AG04450 (cell line): ENCODE measurements at regions of chr1 and their contacts with region 1.

Region 1: DNA sequence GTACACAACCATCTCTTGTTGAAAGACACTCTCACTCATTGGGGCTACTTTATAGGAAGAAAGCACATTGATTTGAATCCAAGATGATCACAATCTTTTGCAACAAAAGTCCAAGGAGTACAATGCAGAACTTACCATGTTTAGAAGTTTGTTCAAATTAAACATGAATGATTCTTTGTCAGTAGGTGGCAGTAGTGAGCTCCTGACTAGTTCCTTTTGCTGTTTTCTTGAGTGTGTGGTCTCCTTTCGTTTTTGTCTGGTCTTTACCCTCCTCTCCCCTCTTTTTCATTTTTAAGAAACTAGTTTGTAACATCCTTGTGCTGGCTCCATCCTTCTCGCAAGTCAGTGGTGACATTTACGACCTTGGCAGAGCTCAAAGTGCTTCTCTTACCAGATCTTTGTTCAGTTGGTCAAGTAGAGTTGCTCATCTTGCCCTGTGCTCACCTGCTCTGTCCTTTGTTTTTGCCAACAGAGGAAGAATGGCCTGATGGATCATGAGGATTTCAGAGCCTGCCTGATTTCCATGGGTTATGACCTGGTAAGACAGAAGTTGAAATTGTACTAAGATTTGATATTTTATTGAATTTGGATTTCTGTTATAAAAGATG is 35.7 kb upstream of the MTR start:
- DNase-seq: peak; percentile 8
- H3K4me3 ChIP-seq: no peak overlapping the region
- H3K27ac ChIP-seq: no peak overlapping the region
- H3K27me3 ChIP-seq: no peaks in the 10 kb centered on the region
- CTCF ChIP-seq: peak; percentile 77

Region 2: GRCh38 chr1:236654957-236655356 is 104.4 kb before region 1 on chr1:
- CTCF ChIA-PET with region 1: no interaction called
- POLR2A ChIA-PET with region 1: no interaction called
- DNase-seq: no peak
- H3K4me3 ChIP-seq: no peak overlapping the region
- H3K27ac ChIP-seq: no peak overlapping the region
- H3K27me3 ChIP-seq: no peaks in the 10 kb centered on the region
- CTCF ChIP-seq: no peak

Region 3: DNA sequence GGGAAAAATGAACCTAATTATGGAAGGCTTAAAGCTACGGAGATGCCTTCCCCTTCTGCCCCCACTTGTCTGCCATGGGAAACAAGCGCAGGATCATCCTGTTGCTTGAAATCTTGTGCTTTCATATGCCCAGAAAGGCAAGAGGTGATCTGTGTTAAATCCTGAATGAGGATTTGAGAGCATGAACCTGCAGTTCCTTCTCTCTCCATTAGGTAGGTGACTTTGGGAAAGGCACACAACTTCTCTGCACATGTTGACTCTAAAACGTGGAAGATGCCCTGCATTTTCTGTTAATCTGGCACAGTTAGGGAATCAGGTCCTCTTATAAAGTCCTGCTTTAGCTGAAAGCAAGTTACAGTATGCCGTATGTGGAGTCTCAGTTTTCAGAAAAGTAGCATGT is 10.9 kb before region 1 on chr1:
- CTCF ChIA-PET with region 1: interaction called, 15 read pairs
- POLR2A ChIA-PET with region 1: no interaction called
- DNase-seq: no peak
- H3K4me3 ChIP-seq: no peak overlapping the region
- H3K27ac ChIP-seq: no peak overlapping the region
- H3K27me3 ChIP-seq: no peaks in the 10 kb centered on the region
- CTCF ChIP-seq: peak; percentile 35

Region 4: GRCh38 chr1:236795035-236795756 is 35.8 kb after region 1 on chr1 and contains the start of gene MTR:
- CTCF ChIA-PET with region 1: interaction called, 14 read pairs
- POLR2A ChIA-PET with region 1: interaction called, 7 read pairs
- DNase-seq: peak; percentile 91
- H3K4me3 ChIP-seq: peak within 1 kb of the TSS; percentile 65
- H3K27ac ChIP-seq: peak within 1 kb of the TSS; percentile 68
- H3K27me3 ChIP-seq: no peaks in the 10 kb centered on the region
- CTCF ChIP-seq: no peak
- polyA plus RNA-seq, gene MTR: 11.0 and 13.0 TPM in 2 replicates

Region 5: GRCh38 chr1:236854602-236854978 is 95.2 kb after region 1 on chr1:
- CTCF ChIA-PET with region 1: interaction called, 11 read pairs
- POLR2A ChIA-PET with region 1: no interaction called
- DNase-seq: peak; percentile 8
- H3K4me3 ChIP-seq: no peak overlapping the region
- H3K27ac ChIP-seq: no peak overlapping the region
- H3K27me3 ChIP-seq: no peaks in the 10 kb centered on the region
- CTCF ChIP-seq: no peak

Region 6: DNA sequence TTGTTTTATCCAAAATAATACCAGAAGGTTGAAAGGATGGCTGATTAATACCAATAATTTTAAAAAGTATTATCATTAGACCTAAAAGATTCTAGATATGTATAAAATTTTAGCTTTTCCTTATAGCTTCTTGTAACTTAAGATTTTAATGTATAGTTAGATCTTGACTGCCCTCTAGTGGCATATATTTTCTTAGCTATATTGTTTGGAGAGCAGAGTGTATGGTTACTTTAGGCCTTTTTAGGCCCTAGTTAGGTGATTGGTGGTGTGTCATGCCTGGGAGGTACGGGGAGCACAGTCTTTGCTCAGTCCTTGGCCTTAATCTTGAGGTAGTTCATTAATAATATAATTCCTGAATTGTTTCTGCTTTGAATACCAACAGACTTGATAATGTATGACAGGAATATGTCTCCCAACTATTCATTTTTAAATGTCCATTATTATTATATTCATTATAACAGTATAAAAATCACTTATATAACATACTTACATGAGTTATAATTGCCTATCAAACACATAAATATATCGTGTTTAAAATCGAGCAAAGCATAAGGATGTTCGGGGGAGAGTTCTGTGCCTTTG is 803.0 kb after region 1 on chr1:
- CTCF ChIA-PET with region 1: interaction called, 11 read pairs
- POLR2A ChIA-PET with region 1: no interaction called
- DNase-seq: peak; percentile 3
- H3K4me3 ChIP-seq: no peak overlapping the region
- H3K27ac ChIP-seq: no peak overlapping the region
- H3K27me3 ChIP-seq: no peaks in the 10 kb centered on the region
- CTCF ChIP-seq: peak; percentile 58